ENCODE measurements at regions of chr11 and their contacts with region 1.

Region 1: GRCh38 chr11:121655537-121656327 is 203.0 kb upstream of the SORL1-AS1 start:
- DNase-seq: peak; percentile 94
- ATAC-seq: peak; percentile 96

Region 2: GRCh38 chr11:121328967-121329679 is 326.6 kb before region 1 on chr11:
- intact Hi-C with region 1: no loop called
- DNase-seq: no peak
- ATAC-seq: no peak

Region 3: DNA sequence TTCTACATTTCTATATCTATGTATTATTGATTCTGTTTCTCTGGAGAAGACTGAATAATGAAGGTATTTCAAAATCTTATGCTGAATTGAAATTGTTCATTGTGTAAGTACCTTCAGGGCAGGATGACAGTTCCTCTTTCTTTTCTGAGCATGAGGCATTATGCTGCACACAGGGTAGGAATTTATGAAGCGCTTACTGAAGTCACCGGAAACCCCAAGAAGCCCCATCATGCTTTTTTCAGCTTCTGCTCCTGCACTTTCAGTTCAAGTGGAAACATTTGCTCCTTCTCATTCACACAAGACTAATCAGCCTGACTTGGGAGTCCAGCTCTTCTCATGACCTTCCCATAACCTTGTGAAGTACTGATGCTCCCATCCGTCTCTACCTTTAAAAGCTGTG is 111.7 kb after region 1 on chr11:
- intact Hi-C with region 1: no loop called
- DNase-seq: no peak
- ATAC-seq: no peak

Region 4: GRCh38 chr11:121930004-121930965 is 274.6 kb after region 1 on chr11:
- intact Hi-C with region 1: loop called (anchors 2 kb)
- DNase-seq: no peak
- ATAC-seq: peak; percentile 41

Region 5: DNA sequence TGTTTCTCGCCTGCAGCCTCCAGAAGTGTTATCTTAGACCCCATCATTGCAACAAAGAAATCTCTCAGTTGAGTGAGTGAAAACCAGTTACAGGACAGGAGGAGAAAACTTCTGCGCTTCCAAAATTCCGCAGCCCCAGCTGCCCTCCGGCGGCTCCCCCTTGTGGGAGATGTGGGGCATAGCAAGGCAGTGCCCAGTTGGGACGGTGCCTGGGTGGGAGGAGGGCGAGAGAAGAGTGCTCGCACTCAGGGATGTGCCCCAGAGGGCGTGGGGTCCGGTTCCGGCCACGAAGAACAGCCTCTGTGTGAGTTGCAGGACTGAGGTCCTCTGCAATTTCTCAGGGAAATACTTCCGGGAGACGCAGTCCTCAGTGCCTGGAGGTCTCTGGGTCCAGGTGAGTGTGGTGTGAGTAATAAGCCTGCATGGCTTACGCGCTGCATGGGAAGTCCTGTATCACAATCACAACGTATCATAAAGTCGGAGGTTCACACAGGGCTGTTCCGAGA is 547.3 kb after region 1 on chr11:
- intact Hi-C with region 1: loop called (anchors 1 kb)
- DNase-seq: peak; percentile 86
- ATAC-seq: peak; percentile 89

Region 6: GRCh38 chr11:122434786-122435185 is 779.1 kb after region 1 on chr11:
- intact Hi-C with region 1: no loop called
- DNase-seq: no peak
- ATAC-seq: no peak

Region 7: DNA sequence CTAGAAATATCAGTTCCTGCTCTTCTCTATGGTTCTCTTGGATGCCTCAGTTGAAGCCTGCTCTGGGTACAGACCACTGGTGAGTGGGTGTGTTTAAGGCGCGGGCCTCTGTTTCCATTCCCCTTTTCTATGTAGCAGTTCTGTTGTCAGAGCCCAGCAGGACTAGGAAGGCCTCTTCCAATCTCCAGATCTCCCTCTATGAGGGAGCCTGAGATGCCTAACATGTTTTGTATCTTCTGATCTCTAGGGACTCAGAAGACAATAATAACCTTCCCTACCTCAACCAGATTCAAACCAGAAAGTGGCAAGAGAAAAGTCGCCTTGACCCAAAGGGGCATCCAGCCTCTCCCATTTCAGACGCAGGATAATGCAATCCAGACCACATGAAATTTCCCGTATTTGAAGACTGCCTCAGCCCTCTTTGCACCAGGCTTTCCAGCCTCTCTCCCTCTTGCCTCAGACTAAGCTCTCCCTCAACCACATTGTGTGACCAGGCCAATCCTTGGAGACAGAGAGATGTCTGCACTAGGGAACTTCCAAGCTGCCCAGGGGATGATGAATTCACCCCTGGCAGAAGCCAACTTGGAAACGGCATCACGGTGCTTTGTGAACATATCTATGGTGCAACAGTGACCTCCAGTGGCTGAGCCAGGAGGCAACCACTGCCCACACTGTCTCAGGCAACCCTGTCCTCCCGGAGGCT is 849.7 kb after region 1 on chr11:
- intact Hi-C with region 1: loop called (anchors 1 kb)
- DNase-seq: peak; percentile 78
- ATAC-seq: peak; percentile 97